PC-9 (cell line): ENCODE measurements at regions of chr22 and their contacts with region 1.

Region 1: GRCh38 chr22:25362215-25362882 is 142.9 kb downstream of the CRYBB2 start:
- DNase-seq: peak in 1 of 2 experiments; percentile 40
- H3K4me3 ChIP-seq: no peak overlapping the region
- H3K27ac ChIP-seq: no peak overlapping the region
- H3K4me1 ChIP-seq: no peaks in the 10 kb centered on the region
- H3K27me3 ChIP-seq: no peaks in the 10 kb centered on the region
- CTCF ChIP-seq: peak; percentile 98

Region 2: DNA sequence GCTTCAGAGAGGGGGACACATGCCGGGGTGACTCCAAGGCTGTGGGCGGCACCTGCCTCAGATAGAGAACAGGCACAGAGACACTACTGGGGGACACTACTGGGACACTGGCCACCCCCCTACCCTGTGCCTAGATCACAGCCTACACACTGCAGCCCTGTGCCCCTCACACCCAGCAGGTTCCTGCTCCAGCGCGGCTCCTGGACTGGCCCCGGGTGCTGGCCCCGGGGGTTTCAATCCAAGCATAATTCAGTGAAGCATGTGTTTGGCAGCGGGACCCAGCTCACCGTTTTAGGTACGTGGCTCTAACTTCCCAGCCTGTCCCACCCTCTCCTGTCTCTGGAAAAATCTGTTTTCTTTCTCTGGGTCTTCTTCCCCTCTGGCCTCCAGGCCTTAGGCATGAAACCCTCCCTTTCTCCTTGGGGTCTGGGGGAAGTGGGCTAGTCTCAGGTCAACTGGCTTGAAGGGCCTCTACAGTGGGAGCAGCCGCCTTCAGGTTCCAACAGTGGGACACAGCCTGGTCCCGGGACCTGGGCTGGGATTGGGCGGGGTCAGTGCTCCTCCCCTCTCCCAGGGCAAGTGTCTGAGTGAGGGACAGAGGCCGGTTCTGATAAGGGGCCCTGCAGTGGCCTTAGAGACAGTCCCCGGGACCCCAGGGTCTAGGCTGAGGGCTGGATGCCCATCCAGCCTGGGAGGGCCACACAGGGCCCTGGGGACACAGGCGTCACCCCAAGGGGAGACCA is 44.1 kb before region 1 on chr22:
- CTCF ChIA-PET with region 1: no interaction called
- POLR2A ChIA-PET with region 1: no interaction called
- intact Hi-C with region 1: no loop called
- DNase-seq: no peak
- H3K4me3 ChIP-seq: no peak overlapping the region
- H3K27ac ChIP-seq: no peak overlapping the region
- H3K4me1 ChIP-seq: no peaks in the 10 kb centered on the region
- H3K27me3 ChIP-seq: peaks cover 5% of the 10 kb centered on the region; the same call in 1 of the 2 replicates
- CTCF ChIP-seq: no peak

Region 3: GRCh38 chr22:25447686-25448434 is 85.5 kb after region 1 on chr22:
- CTCF ChIA-PET with region 1: no interaction called
- POLR2A ChIA-PET with region 1: no interaction called
- intact Hi-C with region 1: loop called (anchors 1 kb)
- DNase-seq: peak; percentile 66 to 68
- H3K4me3 ChIP-seq: peak overlapping the region; percentile 77
- H3K27ac ChIP-seq: no peak overlapping the region
- H3K4me1 ChIP-seq: peaks cover 13% of the 10 kb centered on the region
- H3K27me3 ChIP-seq: no peaks in the 10 kb centered on the region
- CTCF ChIP-seq: peak; percentile 84